HEK293 (cell line): ENCODE measurements at regions of chr1 and their contacts with region 1.

Region 1: GRCh38 chr1:182084487-182085316 is 23.2 kb upstream of the ZNF648 start:
- H3K4me3 ChIP-seq: no peak overlapping the region
- H3K27ac ChIP-seq: no peak overlapping the region
- H3K4me1 ChIP-seq: no peaks in the 10 kb centered on the region
- CTCF ChIP-seq: peak; percentile 68; the same call in 1 of the 2 replicates

Region 2: GRCh38 chr1:181936768-181937581 is 147.7 kb before region 1 on chr1:
- CTCF ChIA-PET with region 1: interaction called, 14 read pairs
- POLR2A ChIA-PET with region 1: no interaction called
- H3K4me3 ChIP-seq: peak overlapping the region; percentile 18; the same call in 1 of the 2 replicates
- H3K27ac ChIP-seq: no peak overlapping the region
- H3K4me1 ChIP-seq: no peaks in the 10 kb centered on the region
- CTCF ChIP-seq: peak; percentile 67; the same call in 1 of the 2 replicates

Region 3: DNA sequence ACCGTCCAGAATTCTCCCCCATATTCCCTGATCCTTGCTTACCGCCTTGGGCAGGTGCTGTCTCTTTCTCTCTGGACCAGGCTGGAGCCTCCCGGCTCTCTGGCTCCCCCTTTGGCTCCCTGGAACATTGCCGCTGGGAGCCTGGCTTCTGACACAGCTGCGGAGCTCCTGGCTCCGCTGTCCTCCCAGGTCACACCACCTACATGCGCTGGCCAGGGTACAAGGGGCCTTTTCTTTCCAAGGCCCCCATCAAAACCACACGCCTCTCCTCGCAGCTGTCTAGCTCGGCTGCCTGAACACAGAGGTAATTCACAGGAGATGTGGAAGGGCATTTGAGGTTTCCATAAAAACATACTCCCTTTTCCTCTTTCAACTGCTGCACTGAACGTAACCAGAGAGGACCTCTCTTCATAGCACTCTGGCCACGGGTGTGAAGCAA is 15.7 kb before region 1 on chr1:
- CTCF ChIA-PET with region 1: interaction called, 16 read pairs
- POLR2A ChIA-PET with region 1: no interaction called
- H3K4me3 ChIP-seq: no peak overlapping the region
- H3K27ac ChIP-seq: no peak overlapping the region
- H3K4me1 ChIP-seq: no peaks in the 10 kb centered on the region
- CTCF ChIP-seq: peak; percentile 38; the same call in 1 of the 2 replicates

Region 4: GRCh38 chr1:182198049-182198501 is 113.4 kb after region 1 on chr1:
- CTCF ChIA-PET with region 1: interaction called, 11 read pairs
- POLR2A ChIA-PET with region 1: no interaction called
- H3K4me3 ChIP-seq: no peak overlapping the region
- H3K27ac ChIP-seq: no peak overlapping the region
- H3K4me1 ChIP-seq: no peaks in the 10 kb centered on the region
- CTCF ChIP-seq: no peak

Region 5: DNA sequence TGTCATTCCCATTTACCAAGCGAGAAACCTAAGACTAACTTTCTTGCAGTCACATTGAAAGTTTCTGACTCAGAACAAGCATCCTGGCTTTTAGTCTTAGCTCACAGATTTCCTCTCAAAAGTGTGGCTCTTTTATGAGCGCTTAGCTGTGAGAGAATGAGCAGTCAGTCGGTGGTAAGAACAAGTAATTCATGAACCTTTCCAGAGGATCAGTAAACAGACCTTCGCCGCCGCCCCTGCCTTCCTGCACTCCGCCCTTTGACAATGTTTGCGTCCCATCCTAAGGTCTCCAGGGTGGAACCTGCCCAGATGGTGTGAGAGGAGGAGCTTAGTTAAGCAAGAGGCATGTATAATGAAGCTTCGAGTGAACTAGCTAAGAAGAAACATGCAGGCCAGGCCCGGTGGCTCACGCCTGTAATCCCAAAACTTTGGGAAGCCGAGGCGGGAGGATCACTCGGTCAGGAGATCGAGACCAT is 164.5 kb after region 1 on chr1:
- CTCF ChIA-PET with region 1: no interaction called
- POLR2A ChIA-PET with region 1: no interaction called
- H3K4me3 ChIP-seq: no peak overlapping the region
- H3K27ac ChIP-seq: no peak overlapping the region
- H3K4me1 ChIP-seq: no peaks in the 10 kb centered on the region
- CTCF ChIP-seq: no peak

Region 6: GRCh38 chr1:182595641-182596240 is 511.0 kb after region 1 on chr1:
- CTCF ChIA-PET with region 1: interaction called, 20 read pairs
- POLR2A ChIA-PET with region 1: no interaction called
- H3K4me3 ChIP-seq: no peak overlapping the region
- H3K27ac ChIP-seq: no peak overlapping the region
- H3K4me1 ChIP-seq: no peaks in the 10 kb centered on the region
- CTCF ChIP-seq: peak; percentile 52